Breast epithelium (tissue), 4 donors: ENCODE measurements at regions of chr3 and their contacts with region 1.

Region 1: DNA sequence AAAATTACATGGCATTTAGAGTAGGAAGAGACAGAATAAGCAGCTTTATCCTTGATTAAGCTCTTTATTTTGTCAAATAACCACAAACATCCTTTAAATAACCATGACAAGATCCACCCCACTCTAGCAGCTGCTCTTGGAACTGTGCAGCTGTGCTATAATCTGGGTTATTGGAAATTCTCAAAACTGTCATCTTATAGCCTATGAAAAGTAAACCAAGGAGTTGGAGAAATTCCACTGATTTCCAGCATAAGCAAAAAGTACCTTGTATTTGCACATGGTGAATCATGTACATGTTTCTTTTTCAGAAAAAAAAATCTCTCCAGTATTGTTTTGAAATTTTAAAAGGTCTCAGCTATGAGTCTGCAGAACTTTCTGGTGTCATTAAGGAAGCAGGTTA is 88.8 kb upstream of the ABI3BP start:
- DNase-seq: no peak
- H3K4me3 ChIP-seq: no peak overlapping the region
- H3K27ac ChIP-seq: no peak overlapping the region
- H3K4me1 ChIP-seq: no peaks in the 10 kb centered on the region
- H3K27me3 ChIP-seq: no peaks in the 10 kb centered on the region
- CTCF ChIP-seq: no peak
- POLR2A ChIP-seq: no peak

Region 2: DNA sequence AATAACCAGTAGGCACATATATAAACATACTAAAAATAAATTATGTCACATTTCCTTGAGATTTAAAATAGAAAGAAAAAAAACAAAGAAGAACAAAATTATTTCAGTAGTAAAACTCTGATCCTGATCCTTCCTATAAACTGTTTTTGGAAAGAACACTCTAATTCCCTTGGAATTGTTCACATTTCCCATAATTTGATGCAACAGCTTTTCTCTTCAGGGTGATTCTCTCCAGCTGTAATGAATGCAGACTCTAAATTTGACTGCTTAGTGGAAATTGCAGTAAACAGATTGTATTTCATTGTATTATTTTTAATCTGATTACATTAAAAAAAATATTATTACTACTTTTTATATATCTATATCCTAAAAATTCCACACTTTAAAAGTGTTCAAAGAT is 18.6 kb before region 1 on chr3:
- intact Hi-C with region 1: loop called (anchors 2 kb)
- DNase-seq: no peak
- H3K4me3 ChIP-seq: no peak overlapping the region
- H3K27ac ChIP-seq: no peak overlapping the region
- H3K4me1 ChIP-seq: peaks cover 0 to 6% of the 10 kb centered on the region in 2 donors
- H3K27me3 ChIP-seq: no peaks in the 10 kb centered on the region
- CTCF ChIP-seq: no peak
- POLR2A ChIP-seq: no peak

Region 3: GRCh38 chr3:101758224-101758623 is 676.2 kb after region 1 on chr3:
- intact Hi-C with region 1: loop called (anchors 5 kb)
- DNase-seq: no peak
- H3K4me3 ChIP-seq: no peak overlapping the region
- H3K27ac ChIP-seq: no peak overlapping the region
- H3K4me1 ChIP-seq: no peaks in the 10 kb centered on the region
- H3K27me3 ChIP-seq: no peaks in the 10 kb centered on the region
- CTCF ChIP-seq: no peak
- POLR2A ChIP-seq: no peak